HepG2 (cell line): ENCODE measurements at regions of chr16 and their contacts with region 1.

Region 1: DNA sequence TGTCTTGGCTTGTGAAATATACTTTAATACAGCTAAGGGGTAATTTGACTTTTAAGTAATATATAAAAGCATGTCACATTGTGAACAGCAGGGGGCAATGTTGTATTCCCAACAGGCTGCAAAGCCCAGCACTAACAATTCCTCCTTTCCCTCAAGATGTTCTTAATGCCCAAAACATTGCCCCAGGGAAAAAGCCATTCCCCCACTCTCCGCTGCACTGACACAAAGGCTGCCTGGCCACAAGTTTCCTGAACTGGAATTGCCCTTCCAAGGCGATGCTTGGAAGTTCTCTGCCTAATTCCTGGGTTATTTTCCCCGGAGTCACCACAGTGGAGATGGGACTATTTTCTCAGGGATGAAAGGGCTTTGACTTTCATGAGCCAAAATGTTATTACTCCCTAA is 27.2 kb downstream of the CLEC16A start:
- DNase-seq: peak; percentile 70
- ATAC-seq: peak; percentile 70
- H3K4me3 ChIP-seq: no peak overlapping the region
- H3K27ac ChIP-seq: no peak overlapping the region
- H3K4me1 ChIP-seq: peaks cover 9% of the 10 kb centered on the region
- H3K27me3 ChIP-seq: no peaks in the 10 kb centered on the region; a peak in 1 of 5 replicates
- CTCF ChIP-seq: peak; percentile 88
- EP300 ChIP-seq: no peak
- POLR2A ChIP-seq: no peak
- RAD21 ChIP-seq: peak; percentile 85

Region 2: GRCh38 chr16:11211064-11212002 is 239.8 kb after region 1 on chr16:
- CTCF ChIA-PET with region 1: no interaction called
- POLR2A ChIA-PET with region 1: no interaction called
- in situ Hi-C with region 1: no loop called
- intact Hi-C with region 1: loop called (anchors 2 kb)
- DNase-seq: peak; percentile 33
- ATAC-seq: peak; percentile 68
- H3K4me3 ChIP-seq: no peak overlapping the region
- H3K27ac ChIP-seq: no peak overlapping the region
- H3K4me1 ChIP-seq: peaks cover 5% of the 10 kb centered on the region
- H3K27me3 ChIP-seq: peaks cover 3 to 41% of the 10 kb centered on the region in 2 experiments
- CTCF ChIP-seq: peak; percentile 75
- EP300 ChIP-seq: no peak
- POLR2A ChIP-seq: no peak
- RAD21 ChIP-seq: peak; percentile 50; the same call in 1 of the 2 replicates